Activated naive CD8-positive, alpha-beta T cell treated with anti-CD3 and anti-CD28 coated beads, Interleukin-2, amount 10 ng/mL, durations not matched to agents 7 days and 5 days (primary cell): ENCODE measurements at regions of chr17 and their contacts with region 1.

Region 1: GRCh38 chr17:35879773-35880654 is at the start of gene CCL5:
- DNase-seq: peak; percentile 67
- ATAC-seq: peak; percentile 80
- H3K4me3 Mint-ChIP-seq: peak within 1 kb of the TSS; percentile 81
- H3K27ac Mint-ChIP-seq: peak within 1 kb of the TSS; percentile 85
- H3K4me1 Mint-ChIP-seq: peaks cover 53% of the 10 kb centered on the region
- H3K27me3 Mint-ChIP-seq: no peaks in the 10 kb centered on the region
- total RNA-seq, gene CCL5: 782 to 938 TPM

Region 2: DNA sequence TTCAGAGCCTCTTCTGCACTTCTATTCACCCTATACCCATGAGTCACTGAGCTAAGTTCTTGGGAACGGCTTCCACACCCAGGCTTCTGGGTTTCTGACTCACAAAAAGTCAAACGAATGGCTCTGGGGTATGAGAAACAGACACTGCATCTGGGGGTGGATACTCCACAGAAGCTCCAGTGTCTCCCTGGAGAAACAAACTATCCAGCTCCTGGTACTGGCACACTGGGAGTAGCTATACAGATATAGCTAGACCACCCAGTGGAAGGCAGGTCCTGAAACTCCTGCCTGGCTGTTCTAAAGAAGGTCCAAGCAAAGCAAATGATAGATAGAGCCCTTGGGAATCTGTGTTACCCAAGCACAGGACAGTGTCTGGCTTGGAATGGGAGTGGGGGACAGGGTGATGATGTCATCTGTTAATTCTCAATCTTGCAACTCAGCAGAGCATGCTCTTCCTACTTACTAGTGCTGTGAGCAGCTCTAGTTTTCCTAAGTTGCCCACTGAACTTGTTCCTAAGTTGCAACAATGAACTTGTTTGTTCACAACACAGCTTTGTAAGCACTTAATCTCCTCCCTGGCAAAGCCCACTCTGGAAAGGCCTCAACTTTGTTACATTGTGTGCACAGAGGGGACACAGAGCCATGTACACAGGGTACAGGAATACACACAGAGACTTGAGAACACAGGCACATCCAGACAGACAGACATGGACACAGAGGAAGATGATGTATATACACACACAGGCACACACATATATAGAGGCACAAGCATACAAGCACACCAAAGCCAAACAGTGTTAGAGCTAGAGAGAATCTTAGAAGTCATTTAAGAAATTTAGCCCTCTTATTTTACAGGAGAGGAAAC is 91.3 kb before region 1 on chr17:
- POLR2A ChIA-PET with region 1: no interaction called
- DNase-seq: no peak
- ATAC-seq: peak; percentile 50
- H3K4me3 Mint-ChIP-seq: no peak overlapping the region
- H3K27ac Mint-ChIP-seq: no peak overlapping the region
- H3K4me1 Mint-ChIP-seq: peaks cover 4% of the 10 kb centered on the region
- H3K27me3 Mint-ChIP-seq: peaks cover 37% of the 10 kb centered on the region

Region 3: GRCh38 chr17:35889818-35890763 is 10.1 kb after region 1 on chr17:
- POLR2A ChIA-PET with region 1: interaction called, 82 read pairs
- DNase-seq: no peak
- ATAC-seq: peak; percentile 12
- H3K4me3 Mint-ChIP-seq: peak overlapping the region; percentile 59
- H3K27ac Mint-ChIP-seq: peak overlapping the region; percentile 88
- H3K4me1 Mint-ChIP-seq: peaks cover 55% of the 10 kb centered on the region
- H3K27me3 Mint-ChIP-seq: no peaks in the 10 kb centered on the region

Region 4: DNA sequence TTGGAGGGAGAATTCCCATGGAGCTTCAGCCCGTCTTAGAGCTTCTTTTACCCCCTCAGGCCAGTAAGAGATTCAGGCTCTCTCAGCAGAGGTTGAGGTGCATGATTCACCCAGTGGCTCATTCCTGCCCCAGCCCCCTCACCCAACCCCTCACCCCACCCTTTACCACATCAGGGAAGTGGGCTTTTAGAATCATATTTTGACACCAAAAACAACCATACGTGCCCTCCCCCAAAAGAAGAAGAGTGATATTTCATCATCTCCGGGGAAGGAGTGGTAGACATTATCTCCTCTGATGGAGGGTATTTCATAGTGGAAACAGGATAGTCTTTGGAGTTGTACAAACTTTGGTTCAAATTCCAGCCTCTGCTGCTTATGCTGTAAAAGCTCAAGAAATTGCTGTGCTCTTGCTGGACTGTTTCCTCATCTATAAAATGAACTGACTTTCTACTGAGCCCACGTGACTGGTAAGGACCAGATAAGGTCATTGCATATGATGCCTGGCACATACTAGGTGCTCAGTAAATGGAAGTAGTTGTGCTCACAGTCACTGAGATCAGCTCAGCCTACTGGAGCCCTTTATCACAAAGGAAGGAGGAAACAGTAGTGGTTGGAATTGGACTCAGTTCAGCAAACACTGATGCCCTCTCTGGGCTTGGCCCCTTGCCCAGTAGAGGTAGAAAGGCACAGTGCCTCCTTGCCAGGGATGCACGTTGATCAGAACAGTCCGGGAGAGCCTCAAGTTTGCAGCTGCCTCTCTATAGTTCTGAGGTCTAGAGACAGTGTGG is 18.5 kb after region 1 on chr17:
- POLR2A ChIA-PET with region 1: interaction called, 82 read pairs
- DNase-seq: no peak
- ATAC-seq: peak; percentile 48
- H3K4me3 Mint-ChIP-seq: peak overlapping the region; percentile 80
- H3K27ac Mint-ChIP-seq: peak overlapping the region; percentile 89
- H3K4me1 Mint-ChIP-seq: peaks cover 65% of the 10 kb centered on the region
- H3K27me3 Mint-ChIP-seq: no peaks in the 10 kb centered on the region